ENCODE measurements at regions of chr2 and their contacts with region 1.

Region 1: GRCh38 chr2:112187805-112188596 is 49.8 kb downstream of the FBLN7 start:
- DNase-seq: peak; percentile 91
- H3K4me3 Mint-ChIP-seq: peak overlapping the region; percentile 38
- H3K27ac Mint-ChIP-seq: peak overlapping the region; percentile 94
- H3K4me1 Mint-ChIP-seq: peaks cover 85% of the 10 kb centered on the region
- H3K27me3 Mint-ChIP-seq: no peaks in the 10 kb centered on the region

Region 2: DNA sequence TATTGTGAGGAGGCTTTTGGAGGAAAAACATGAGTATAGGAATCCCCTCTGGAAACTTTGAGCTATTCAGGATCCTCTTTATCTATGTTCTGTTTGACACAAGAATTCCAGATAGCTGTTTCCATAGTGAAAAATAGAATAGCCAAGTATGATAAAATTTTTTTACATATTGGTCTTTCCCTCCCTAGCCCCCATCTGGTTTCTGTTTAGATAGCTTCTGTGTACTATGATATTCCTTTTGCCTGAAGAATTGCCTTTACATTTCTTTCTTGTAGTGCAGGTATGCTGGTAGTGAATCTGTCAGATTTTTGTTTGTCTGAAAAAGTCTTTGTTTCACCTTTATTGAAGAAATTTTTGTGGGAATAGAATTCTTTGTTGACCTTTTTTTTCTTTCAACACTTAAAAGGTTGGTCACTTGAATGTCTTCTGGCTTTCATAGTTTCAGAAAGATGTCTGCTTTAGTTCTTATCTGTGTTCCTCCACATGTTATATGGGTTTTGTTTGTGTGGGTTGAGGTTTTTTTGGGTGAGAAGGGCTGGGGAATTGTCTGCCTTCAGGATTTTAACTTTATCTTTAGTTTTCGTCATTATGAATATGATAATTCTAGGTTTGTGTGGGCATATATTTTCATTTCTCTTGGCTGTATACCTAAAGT is 79.7 kb before region 1 on chr2:
- CTCF ChIA-PET with region 1: no interaction called
- POLR2A ChIA-PET with region 1: no interaction called
- intact Hi-C with region 1: no loop called
- DNase-seq: no peak
- H3K4me3 Mint-ChIP-seq: no peak overlapping the region
- H3K27ac Mint-ChIP-seq: no peak overlapping the region
- H3K4me1 Mint-ChIP-seq: peaks cover 14% of the 10 kb centered on the region
- H3K27me3 Mint-ChIP-seq: no peaks in the 10 kb centered on the region

Region 3: DNA sequence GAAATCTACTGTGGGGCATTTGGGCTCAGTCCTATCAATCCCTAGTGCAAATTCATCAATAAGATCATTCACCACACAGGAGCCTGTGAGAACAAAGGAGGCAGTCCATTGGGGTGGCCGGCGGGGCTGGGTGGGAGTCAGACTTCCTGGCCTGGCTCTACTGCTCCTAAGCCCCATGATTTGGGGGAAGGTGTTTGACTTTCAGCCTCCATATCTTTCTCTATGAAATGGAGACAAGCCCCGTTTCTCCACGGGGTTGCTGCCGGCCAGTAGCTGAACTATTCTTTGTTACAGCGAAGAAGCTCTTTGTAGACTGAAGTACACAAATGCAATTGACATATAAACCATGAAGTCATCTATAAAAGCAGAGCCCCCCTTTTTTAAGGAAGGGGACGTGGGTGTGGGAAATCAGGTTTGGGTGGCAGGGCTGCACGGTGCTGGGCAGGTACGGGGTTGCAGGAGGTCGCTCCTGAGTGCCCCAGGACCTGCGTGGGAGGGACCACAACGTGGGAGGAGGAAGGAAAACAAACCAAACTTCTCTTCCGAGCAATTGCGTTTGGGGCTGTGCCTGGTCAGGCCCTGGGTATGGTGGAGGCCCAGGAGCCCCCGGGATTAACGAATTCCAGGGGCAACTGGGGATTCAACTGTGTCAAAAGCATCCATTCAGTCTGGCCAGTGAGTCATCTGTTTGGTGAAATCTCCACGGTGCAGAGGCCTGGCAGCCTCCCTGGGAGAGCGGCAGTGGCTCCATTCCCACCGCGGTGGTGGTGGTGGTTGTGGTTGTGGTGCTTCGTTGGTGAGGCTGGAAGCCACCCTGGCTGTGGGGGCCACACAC is 31.6 kb before region 1 on chr2:
- CTCF ChIA-PET with region 1: interaction called, 3 read pairs
- POLR2A ChIA-PET with region 1: interaction called, 12 read pairs
- intact Hi-C with region 1: loop called (anchors 2 kb)
- DNase-seq: peak; percentile 76
- H3K4me3 Mint-ChIP-seq: peak overlapping the region; percentile 59
- H3K27ac Mint-ChIP-seq: peak overlapping the region; percentile 82
- H3K4me1 Mint-ChIP-seq: peaks cover 51% of the 10 kb centered on the region
- H3K27me3 Mint-ChIP-seq: no peaks in the 10 kb centered on the region

Region 4: GRCh38 chr2:112229348-112229747 is 41.3 kb after region 1 on chr2:
- CTCF ChIA-PET with region 1: no interaction called
- POLR2A ChIA-PET with region 1: no interaction called
- intact Hi-C with region 1: no loop called
- DNase-seq: no peak
- H3K4me3 Mint-ChIP-seq: no peak overlapping the region
- H3K27ac Mint-ChIP-seq: no peak overlapping the region
- H3K4me1 Mint-ChIP-seq: peaks cover 2% of the 10 kb centered on the region
- H3K27me3 Mint-ChIP-seq: no peaks in the 10 kb centered on the region

Region 5: DNA sequence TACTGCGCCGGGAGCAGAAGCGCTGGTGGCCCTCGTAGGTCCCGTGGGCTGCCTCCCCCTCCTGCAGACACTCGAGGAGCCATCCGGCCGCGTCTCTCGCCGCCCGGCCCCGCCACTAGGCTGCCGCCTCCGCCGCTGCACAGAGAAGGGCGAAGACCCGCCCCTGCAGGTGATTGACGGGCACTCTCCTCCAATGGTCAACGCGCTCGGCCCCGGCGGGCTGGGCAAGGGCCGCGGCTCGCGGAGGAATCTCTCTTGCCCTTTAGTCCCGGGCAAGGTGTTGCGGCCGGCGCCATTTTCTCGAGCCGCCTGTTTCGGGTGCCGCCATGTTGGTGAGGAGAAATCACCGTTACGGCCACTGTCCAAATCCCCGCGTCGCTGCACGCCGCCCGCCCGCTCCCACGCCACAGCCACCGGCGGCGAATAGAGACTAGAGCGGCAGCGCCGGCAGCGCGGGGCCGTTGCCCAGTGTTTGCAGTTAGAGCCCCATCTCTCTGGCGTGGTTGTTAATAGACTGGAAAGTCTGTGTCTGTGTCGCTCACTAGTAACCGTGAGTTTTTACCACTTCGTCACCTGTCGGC is 87.4 kb after region 1 on chr2 and contains the start of gene ZC3H6:
- CTCF ChIA-PET with region 1: no interaction called
- POLR2A ChIA-PET with region 1: interaction called, 3 read pairs
- intact Hi-C with region 1: loop called (anchors 2 kb)
- DNase-seq: peak; percentile 100
- H3K4me3 Mint-ChIP-seq: peak within 1 kb of the TSS; percentile 93
- H3K27ac Mint-ChIP-seq: peak within 1 kb of the TSS; percentile 97
- H3K4me1 Mint-ChIP-seq: peaks cover 17% of the 10 kb centered on the region
- H3K27me3 Mint-ChIP-seq: no peaks in the 10 kb centered on the region
- total RNA-seq, gene ZC3H6: 14.4 to 15.0 TPM

Region 6: GRCh38 chr2:112584134-112584890 is 396.3 kb after region 1 on chr2 and contains the start of gene CHCHD5:
- CTCF ChIA-PET with region 1: no interaction called
- POLR2A ChIA-PET with region 1: no interaction called
- intact Hi-C with region 1: loop called (anchors 5 kb)
- DNase-seq: peak; percentile 97
- H3K4me3 Mint-ChIP-seq: peak within 1 kb of the TSS; percentile 97
- H3K27ac Mint-ChIP-seq: peak within 1 kb of the TSS; percentile 99
- H3K4me1 Mint-ChIP-seq: peaks cover 30% of the 10 kb centered on the region
- H3K27me3 Mint-ChIP-seq: no peaks in the 10 kb centered on the region
- total RNA-seq, gene CHCHD5: 39.3 to 41.4 TPM

Measured in activated CD4-positive, alpha-beta memory T cell treated with anti-CD3 and anti-CD28 coated beads for 36 hours (primary cell).